Right ventricle myocardium superior (tissue), 1 donor: ENCODE measurements at regions of chr13 and their contacts with region 1.

Region 1: DNA sequence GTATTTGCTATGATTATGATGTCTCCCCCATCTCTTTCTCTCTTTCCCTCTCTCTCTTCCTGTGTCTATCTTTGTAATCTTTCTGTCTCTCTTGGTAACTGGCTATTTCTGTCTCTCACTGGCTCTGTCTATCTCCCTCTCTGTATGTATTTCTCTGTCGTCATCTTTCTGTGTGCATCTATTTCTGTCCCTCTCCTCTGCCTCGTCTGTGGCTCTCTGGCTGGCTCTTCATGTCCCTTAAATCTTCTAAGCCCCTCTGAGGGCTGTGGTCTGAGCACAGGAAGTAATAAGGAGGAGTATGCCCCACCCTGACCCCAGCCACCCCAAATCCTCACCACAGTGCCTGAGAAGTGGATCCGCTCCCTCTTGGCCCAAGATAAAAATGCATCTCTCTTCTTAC is 104.4 kb downstream of the DNAJC15 start:
- DNase-seq: no peak
- ATAC-seq: peak; percentile 77

Region 2: GRCh38 chr13:42602906-42603305 is 524.9 kb before region 1 on chr13:
- intact Hi-C with region 1: loop called (anchors 10 kb)
- DNase-seq: no peak
- ATAC-seq: no peak

Region 3: DNA sequence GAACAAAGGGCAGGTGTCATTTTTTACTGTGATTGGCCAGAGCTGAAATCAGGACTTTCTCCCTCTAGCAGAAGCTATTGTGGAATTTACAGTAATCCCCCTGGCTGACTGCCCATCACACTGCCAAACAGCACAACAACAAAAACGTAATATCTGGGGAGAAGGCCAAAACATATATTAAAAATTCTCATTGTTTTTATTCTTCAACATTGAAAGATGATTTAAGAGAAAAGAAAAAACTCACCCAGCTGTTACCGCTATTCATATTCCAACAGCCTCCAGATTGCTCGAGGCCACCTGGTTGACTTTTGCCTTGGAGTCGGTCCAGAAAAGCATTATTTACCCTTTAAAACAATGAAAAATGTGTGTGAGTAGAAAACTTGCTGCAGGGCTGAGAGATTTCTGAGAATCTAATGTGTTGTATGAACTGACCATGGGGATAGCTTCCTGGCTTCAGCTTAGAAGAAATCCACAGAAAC is 233.0 kb before region 1 on chr13:
- intact Hi-C with region 1: no loop called
- DNase-seq: peak; percentile 43
- ATAC-seq: no peak